Aorta (tissue), 5 donors: ENCODE measurements at regions of chr16 and their contacts with region 1.

Region 1: DNA sequence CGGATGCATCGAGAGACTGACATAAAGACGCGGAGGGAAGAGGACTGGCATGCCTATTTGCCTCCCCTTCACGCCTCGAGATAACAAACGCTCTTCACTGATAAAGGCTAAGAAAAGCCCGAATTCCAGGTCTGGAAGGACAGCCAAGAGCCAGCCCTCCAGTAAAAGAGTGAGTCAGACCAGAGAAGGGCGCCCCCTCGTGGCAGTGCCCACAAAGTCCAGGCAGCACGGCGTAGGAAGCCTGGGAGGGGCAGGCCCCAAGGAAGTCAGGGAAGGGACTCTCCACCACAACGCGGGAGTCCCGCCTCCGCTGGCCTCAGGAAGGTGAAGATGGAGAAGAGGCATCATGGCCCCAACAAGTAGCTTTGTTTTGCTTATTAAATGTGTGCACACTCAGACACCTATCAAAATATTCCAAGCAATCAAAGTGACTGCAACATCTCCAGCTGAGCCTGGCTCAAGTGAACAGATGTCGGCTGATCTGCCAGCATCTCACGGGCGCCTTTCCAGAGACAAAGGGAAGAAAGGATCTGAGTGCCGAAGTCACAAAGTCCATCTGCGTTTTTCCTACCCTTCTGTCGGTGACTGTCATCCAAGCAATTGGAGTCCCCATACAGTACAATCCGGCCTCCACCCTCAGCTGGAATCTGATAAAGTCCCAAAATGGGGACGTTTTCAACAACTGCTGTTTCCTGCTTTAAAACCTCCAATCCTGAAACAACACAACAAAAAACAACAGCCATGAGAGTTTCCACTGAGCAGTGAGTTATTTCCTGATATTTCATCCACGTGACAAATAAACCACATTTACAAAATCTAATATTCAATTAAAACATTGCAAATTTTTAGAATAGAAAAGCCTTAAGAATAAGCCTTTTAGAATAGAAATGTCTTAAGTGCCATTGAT is 20.4 kb upstream of the SLC38A8 start:
- DNase-seq: peak; percentile 85 to 92
- ATAC-seq: peak; percentile 92
- H3K4me3 ChIP-seq: no peak overlapping the region
- H3K27ac ChIP-seq: no peak overlapping the region
- H3K4me1 ChIP-seq: no peaks in the 10 kb centered on the region
- H3K27me3 ChIP-seq: no peaks in the 10 kb centered on the region

Region 2: DNA sequence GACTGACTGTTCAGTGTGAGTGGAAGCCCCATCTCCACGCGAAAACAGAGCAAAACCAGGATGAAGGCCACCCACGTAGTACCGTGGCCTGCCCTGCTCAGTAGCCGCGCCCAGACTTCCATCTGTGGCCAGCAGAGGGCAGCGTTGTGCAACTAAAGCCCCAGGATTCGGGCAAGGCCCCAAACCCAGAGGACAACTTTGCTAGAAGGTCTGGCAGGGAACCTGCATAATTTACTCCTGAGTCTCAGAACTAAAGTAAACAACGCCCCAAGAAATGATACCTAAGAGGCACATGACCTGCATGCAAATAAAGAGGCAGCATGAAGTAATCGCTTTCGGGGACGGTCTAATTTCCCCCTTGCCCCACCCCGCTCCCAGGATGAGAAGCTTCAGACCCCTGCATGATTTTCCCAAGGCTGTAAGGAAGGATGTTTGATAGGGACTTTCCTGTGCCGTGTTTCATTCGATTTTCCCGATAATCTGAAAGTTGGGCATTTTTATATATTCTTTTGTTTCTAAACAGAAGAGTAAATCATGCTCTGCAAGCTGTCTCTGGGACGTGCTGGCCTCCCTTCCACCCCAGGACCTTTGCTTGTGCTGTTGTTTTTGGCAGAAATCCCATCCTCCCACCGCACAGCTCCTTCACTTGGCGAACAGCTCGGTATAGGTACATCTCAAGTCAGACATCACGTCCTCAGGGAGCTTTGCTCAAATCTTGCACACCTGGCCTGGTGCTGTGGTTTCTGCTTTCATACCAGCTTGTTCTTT is 236.7 kb before region 1 on chr16:
- intact Hi-C with region 1: loop called in 1 of 2 experiments (anchors 5 kb)
- DNase-seq: peak; percentile 87 to 95
- ATAC-seq: peak; percentile 80
- H3K4me3 ChIP-seq: no peak overlapping the region
- H3K27ac ChIP-seq: no peak overlapping the region
- H3K4me1 ChIP-seq: no peaks in the 10 kb centered on the region
- H3K27me3 ChIP-seq: no peaks in the 10 kb centered on the region

Region 3: DNA sequence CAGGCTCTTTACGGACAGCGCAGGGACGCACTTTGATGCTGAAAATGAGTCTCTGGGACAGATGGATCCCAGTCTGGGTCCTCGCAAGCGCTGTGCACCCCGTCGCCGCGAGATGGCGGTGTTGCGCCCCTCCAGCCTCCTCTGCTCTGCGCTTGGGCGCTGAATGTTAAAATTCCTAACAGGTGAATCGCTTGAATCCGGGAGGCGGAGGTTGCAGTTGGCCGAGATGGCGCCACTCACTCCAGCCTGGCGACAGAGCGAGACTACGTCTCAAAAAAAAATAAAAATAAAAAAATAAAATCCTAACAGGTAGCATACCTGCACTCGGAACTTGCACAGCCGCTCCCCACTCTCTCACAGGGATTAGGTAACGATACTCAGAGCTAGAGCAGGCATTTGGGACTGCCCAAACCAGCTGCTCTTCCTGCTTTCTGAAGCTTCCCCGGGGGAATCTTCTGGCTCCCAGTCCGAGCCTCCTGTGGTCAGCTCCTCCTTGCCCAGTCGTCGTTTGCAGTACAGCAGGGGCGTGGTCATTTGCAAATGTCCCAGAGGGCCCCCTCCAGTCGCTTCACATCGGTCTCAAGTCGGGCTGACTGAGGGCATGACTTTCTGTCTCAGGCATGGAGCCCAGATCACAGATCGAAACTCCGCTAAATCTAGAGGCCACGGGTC is 136.1 kb before region 1 on chr16:
- intact Hi-C with region 1: loop called in 1 of 2 experiments (anchors 2 kb)
- DNase-seq: peak; percentile 81 to 94
- ATAC-seq: peak; percentile 75
- H3K4me3 ChIP-seq: no peak overlapping the region
- H3K27ac ChIP-seq: no peak overlapping the region
- H3K4me1 ChIP-seq: no peaks in the 10 kb centered on the region
- H3K27me3 ChIP-seq: no peaks in the 10 kb centered on the region

Region 4: DNA sequence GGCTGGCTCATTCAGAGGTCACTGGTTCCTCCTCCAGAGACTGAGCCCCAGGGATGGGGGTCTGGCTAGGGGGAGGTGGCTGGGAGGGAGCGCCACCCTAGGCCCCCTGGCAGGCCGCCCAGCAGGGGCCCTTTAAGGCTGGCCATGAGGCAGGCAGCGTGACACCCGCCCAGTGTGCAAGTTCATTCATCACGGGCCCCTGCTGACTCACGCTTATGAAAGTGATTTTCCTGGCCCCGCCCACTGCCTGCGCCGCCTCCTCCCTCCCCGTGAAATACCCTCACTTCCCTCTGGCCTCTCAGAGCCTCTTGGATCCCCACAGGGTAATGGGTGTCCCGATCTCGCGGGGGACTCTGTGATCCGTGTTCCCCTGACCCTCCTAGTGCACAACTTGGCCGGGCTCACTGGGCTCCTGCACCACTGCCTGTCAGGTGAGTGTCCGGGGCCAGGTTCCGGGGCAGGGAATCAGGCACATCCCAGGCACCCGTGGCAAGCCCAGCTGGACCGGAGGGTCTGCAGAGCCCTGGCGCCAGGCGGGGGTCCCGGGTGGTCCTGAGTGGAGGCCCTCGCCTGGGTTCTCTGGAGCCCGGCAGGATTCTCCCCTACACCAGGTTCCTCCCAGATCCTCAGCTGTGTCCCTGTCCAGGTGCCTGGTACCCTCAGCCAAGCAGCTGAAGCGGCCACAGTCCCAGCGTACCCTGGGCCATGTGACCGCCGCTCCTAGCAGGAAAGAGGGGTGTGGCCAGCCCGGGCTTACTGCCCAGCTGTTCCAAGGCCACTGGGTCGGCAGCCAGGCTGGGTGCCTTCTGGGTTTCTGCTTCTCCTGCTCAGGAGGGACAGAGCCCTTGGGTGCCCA is 109.8 kb before region 1 on chr16 and contains the start of gene OSGIN1:
- intact Hi-C with region 1: loop called (anchors 1 to 5 kb)
- DNase-seq: peak; percentile 98
- ATAC-seq: peak; percentile 94
- H3K4me3 ChIP-seq: peak within 1 kb of the TSS; percentile 41 to 55
- H3K27ac ChIP-seq: peak within 1 kb of the TSS in 1 of 2 donors; percentile 93
- H3K4me1 ChIP-seq: no peaks in the 10 kb centered on the region
- H3K27me3 ChIP-seq: no peaks in the 10 kb centered on the region
- total RNA-seq, gene OSGIN1: 10.3 to 13.6 TPM

Region 5: DNA sequence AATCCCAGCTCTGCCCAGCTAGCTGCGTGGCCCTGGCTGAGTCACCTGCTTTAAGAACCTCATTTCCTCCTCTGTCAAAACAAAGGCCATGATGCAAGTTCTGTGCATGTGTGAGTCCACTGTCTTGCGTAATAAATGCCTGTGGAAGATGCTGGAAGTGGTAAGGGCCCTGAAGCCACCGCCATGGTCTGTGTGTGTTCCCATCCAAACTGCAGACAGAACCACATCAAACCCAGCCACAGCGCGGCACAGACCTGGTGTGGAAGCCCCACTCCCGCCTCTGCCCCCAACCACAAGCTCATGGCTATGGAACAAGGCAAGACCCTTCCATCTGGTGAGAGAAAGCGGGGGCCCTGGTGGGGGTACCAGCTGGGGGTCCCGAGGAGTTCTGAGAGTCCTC is 68.9 kb before region 1 on chr16:
- intact Hi-C with region 1: no loop called
- DNase-seq: peak in 1 of 2 donors; percentile 45
- ATAC-seq: no peak
- H3K4me3 ChIP-seq: no peak overlapping the region
- H3K27ac ChIP-seq: no peak overlapping the region
- H3K4me1 ChIP-seq: no peaks in the 10 kb centered on the region
- H3K27me3 ChIP-seq: no peaks in the 10 kb centered on the region